PC-9 (cell line): ENCODE measurements at regions of chr11 and their contacts with region 1.

Region 1: GRCh38 chr11:75814686-75815344 is at the start of gene UVRAG:
- DNase-seq: peak; percentile 99 to 100
- H3K4me3 ChIP-seq: peak within 1 kb of the TSS; percentile 84
- H3K27ac ChIP-seq: peak within 1 kb of the TSS; percentile 78
- H3K4me1 ChIP-seq: peaks cover 49% of the 10 kb centered on the region
- H3K27me3 ChIP-seq: no peaks in the 10 kb centered on the region
- CTCF ChIP-seq: no peak; the same call in 1 of the 2 replicates
- total RNA-seq, gene UVRAG: 18.6 and 20.4 TPM in 2 replicates

Region 2: GRCh38 chr11:75706260-75706729 is 108.5 kb before region 1 on chr11:
- CTCF ChIA-PET with region 1: no interaction called
- POLR2A ChIA-PET with region 1: interaction called, 11 read pairs
- intact Hi-C with region 1: no loop called
- DNase-seq: peak; percentile 57 to 64
- H3K4me3 ChIP-seq: no peak overlapping the region
- H3K27ac ChIP-seq: no peak overlapping the region
- H3K4me1 ChIP-seq: peaks cover 3% of the 10 kb centered on the region; the same call in 1 of the 2 replicates
- H3K27me3 ChIP-seq: no peaks in the 10 kb centered on the region
- CTCF ChIP-seq: peak; percentile 96

Region 3: GRCh38 chr11:75743711-75744563 is 70.9 kb before region 1 on chr11:
- CTCF ChIA-PET with region 1: no interaction called
- POLR2A ChIA-PET with region 1: no interaction called
- intact Hi-C with region 1: no loop called
- DNase-seq: no peak
- H3K4me3 ChIP-seq: no peak overlapping the region
- H3K27ac ChIP-seq: no peak overlapping the region
- H3K4me1 ChIP-seq: no peaks in the 10 kb centered on the region
- H3K27me3 ChIP-seq: no peaks in the 10 kb centered on the region
- CTCF ChIP-seq: no peak

Region 4: GRCh38 chr11:75845324-75845723 is 30.5 kb after region 1 on chr11:
- CTCF ChIA-PET with region 1: no interaction called
- POLR2A ChIA-PET with region 1: no interaction called
- intact Hi-C with region 1: no loop called
- DNase-seq: no peak
- H3K4me3 ChIP-seq: no peak overlapping the region
- H3K27ac ChIP-seq: no peak overlapping the region
- H3K4me1 ChIP-seq: peaks cover 12% of the 10 kb centered on the region
- H3K27me3 ChIP-seq: no peaks in the 10 kb centered on the region
- CTCF ChIP-seq: no peak

Region 5: GRCh38 chr11:75867775-75868374 is 53.1 kb after region 1 on chr11:
- CTCF ChIA-PET with region 1: interaction called, 3 read pairs
- POLR2A ChIA-PET with region 1: no interaction called
- intact Hi-C with region 1: loop called (anchors 2 kb)
- DNase-seq: peak; percentile 14 to 52
- H3K4me3 ChIP-seq: no peak overlapping the region
- H3K27ac ChIP-seq: no peak overlapping the region
- H3K4me1 ChIP-seq: peaks cover 19% of the 10 kb centered on the region
- H3K27me3 ChIP-seq: no peaks in the 10 kb centered on the region
- CTCF ChIP-seq: peak; percentile 95

Region 6: DNA sequence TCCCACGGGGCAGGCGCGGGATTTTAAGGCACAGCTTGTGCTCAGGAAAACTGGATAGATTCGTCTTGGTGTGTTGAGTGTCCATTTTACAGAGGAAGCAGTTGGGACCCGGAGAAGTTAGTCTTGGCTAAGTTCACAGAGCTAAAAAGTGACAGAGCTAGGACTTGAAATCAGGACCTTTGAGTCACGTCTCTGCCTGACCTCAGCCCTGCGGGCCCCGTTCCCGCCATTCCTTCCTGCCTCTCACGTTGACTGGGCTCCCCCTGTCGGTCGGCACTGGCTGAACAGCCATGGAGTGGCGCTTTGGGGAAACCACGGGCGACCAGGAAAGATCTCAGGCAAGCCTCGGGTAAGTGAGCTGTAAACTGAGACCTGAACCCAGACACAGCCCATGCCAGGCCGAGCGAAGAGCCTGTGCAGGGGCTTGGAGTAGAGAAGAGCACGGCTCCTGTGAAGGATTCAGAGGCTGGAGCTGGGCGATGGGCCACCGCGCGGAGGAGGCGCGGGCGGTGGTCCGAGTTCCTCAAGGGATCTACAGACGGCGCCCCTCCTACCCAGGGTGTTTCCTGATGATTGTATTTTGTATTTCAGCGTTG is 337.4 kb after region 1 on chr11:
- CTCF ChIA-PET with region 1: interaction called, 7 read pairs
- POLR2A ChIA-PET with region 1: no interaction called
- intact Hi-C with region 1: loop called (anchors 5 kb)
- DNase-seq: peak in 1 of 2 experiments; percentile 76
- H3K4me3 ChIP-seq: no peak overlapping the region
- H3K27ac ChIP-seq: peak overlapping the region; percentile 88
- H3K4me1 ChIP-seq: peaks cover 37% of the 10 kb centered on the region
- H3K27me3 ChIP-seq: no peaks in the 10 kb centered on the region
- CTCF ChIP-seq: peak; percentile 72

Region 7: GRCh38 chr11:76577199-76577920 is 762.5 kb after region 1 on chr11:
- CTCF ChIA-PET with region 1: no interaction called
- POLR2A ChIA-PET with region 1: no interaction called
- intact Hi-C with region 1: loop called (anchors 1 kb)
- DNase-seq: peak; percentile 95 to 97
- H3K4me3 ChIP-seq: no peak overlapping the region
- H3K27ac ChIP-seq: peak overlapping the region; percentile 59
- H3K4me1 ChIP-seq: peaks cover 28% of the 10 kb centered on the region
- H3K27me3 ChIP-seq: no peaks in the 10 kb centered on the region
- CTCF ChIP-seq: no peak

Region 8: GRCh38 chr11:76637491-76638269 is 822.9 kb after region 1 on chr11:
- CTCF ChIA-PET with region 1: no interaction called
- POLR2A ChIA-PET with region 1: no interaction called
- intact Hi-C with region 1: loop called (anchors 10 kb)
- DNase-seq: no peak
- H3K4me3 ChIP-seq: no peak overlapping the region
- H3K27ac ChIP-seq: no peak overlapping the region
- H3K4me1 ChIP-seq: no peaks in the 10 kb centered on the region
- H3K27me3 ChIP-seq: peaks cover 78% of the 10 kb centered on the region
- CTCF ChIP-seq: no peak